ENCODE measurements at regions of chr1 and their contacts with region 1.

Region 1: DNA sequence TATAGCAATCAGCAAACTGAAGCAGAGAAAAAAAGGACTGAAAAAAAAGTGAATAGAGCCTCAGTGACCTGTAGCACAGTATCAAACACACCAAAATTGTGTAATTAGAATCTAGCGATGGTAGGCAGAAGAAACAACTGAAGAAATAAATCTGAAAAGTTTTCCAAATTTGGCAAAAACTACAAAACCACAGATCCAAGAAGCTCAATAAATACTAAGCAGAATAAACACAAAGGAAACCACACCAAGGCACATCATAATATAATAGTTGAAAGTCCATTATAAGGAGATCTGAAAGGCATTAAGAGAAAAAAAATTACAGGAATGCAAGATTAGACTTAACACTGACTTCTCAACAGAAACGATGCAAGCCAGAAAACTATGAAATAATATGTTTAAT is 7.1 kb upstream of the IL12RB2 start:
- DNase-seq: no peak
- H3K4me3 Mint-ChIP-seq: peak overlapping the region; percentile 35
- H3K27ac Mint-ChIP-seq: peak overlapping the region; percentile 63
- H3K4me1 Mint-ChIP-seq: peaks cover 88% of the 10 kb centered on the region
- H3K27me3 Mint-ChIP-seq: no peaks in the 10 kb centered on the region

Region 2: DNA sequence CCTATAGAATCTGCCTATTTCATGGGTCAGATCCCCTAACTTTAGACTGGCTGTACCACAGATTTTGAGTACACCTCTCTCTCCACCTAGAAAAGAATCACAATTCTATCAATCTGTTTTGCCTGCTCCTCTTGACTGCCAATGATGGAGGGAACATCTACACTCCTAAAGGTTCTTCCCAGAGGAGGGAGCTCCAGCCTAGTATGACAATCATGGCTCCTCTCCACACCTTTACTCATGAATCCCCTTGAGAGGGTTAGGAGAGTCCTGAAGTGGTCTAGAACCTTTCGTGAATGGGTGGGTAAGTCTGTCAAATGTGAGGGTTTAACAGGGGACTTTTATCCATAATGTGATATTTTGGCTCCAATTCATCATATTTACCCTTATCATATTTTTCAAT is 423.9 kb before region 1 on chr1:
- intact Hi-C with region 1: no loop called
- DNase-seq: no peak
- H3K4me3 Mint-ChIP-seq: no peak overlapping the region
- H3K27ac Mint-ChIP-seq: no peak overlapping the region
- H3K4me1 Mint-ChIP-seq: no peaks in the 10 kb centered on the region
- H3K27me3 Mint-ChIP-seq: peaks cover 6% of the 10 kb centered on the region

Region 3: DNA sequence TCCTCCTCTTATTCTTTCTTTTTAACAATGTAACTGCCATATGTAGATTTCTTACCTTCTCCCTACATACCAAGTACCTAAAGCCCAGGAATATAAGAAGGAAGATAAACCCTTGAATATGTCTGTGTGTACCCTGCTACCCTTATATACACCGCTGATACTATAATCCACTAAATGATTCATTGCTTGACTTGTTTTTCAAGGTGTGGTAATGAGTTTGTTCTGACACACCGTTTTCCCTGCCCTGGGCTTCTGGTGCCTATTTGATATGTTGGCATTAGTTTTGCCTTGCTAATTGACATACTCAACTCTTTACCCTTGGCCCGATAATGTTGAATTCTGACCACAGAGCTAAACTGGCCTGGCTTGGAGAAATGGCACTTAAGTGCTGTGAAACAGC is 70.0 kb before region 1 on chr1:
- intact Hi-C with region 1: loop called (anchors 1 kb)
- DNase-seq: no peak
- H3K4me3 Mint-ChIP-seq: no peak overlapping the region
- H3K27ac Mint-ChIP-seq: no peak overlapping the region
- H3K4me1 Mint-ChIP-seq: peaks cover 35% of the 10 kb centered on the region
- H3K27me3 Mint-ChIP-seq: no peaks in the 10 kb centered on the region

Region 4: GRCh38 chr1:67285780-67286488 is 14.6 kb before region 1 on chr1:
- intact Hi-C with region 1: loop called (anchors 1 kb)
- DNase-seq: no peak
- H3K4me3 Mint-ChIP-seq: peak overlapping the region; percentile 5
- H3K27ac Mint-ChIP-seq: peak overlapping the region; percentile 79
- H3K4me1 Mint-ChIP-seq: peaks cover 61% of the 10 kb centered on the region
- H3K27me3 Mint-ChIP-seq: no peaks in the 10 kb centered on the region

Region 5: DNA sequence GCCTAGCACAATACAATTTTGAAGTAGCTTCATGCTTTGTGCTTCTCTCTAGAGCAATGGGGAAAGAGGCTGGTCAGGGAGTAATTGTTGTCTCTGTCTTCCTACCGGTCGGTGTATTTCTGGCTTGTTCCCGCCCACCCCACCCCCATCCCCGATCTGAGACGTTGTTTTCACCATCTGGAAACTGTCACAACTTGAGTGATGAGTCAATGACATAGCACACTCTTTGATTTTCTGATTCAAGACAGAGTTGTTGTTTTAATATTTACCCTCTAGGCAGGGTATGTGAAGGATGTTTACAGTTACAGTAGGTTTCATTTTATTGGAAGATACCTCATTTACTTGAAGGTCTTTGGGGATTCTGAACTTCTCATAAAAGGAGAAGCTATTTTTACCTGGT is 14.1 kb after region 1 on chr1:
- intact Hi-C with region 1: loop called (anchors 1 kb)
- DNase-seq: no peak
- H3K4me3 Mint-ChIP-seq: peak overlapping the region; percentile 100
- H3K27ac Mint-ChIP-seq: peak overlapping the region; percentile 97
- H3K4me1 Mint-ChIP-seq: peaks cover 6% of the 10 kb centered on the region
- H3K27me3 Mint-ChIP-seq: no peaks in the 10 kb centered on the region

Region 6: GRCh38 chr1:67332653-67333529 is 32.3 kb after region 1 on chr1:
- intact Hi-C with region 1: loop called (anchors 1 kb)
- DNase-seq: peak; percentile 64
- H3K4me3 Mint-ChIP-seq: peak overlapping the region; percentile 27
- H3K27ac Mint-ChIP-seq: peak overlapping the region; percentile 99
- H3K4me1 Mint-ChIP-seq: peaks cover 77% of the 10 kb centered on the region
- H3K27me3 Mint-ChIP-seq: no peaks in the 10 kb centered on the region

Region 7: GRCh38 chr1:67339623-67340343 is 39.2 kb after region 1 on chr1:
- intact Hi-C with region 1: loop called (anchors 1 kb)
- DNase-seq: peak; percentile 47
- H3K4me3 Mint-ChIP-seq: peak overlapping the region; percentile 66
- H3K27ac Mint-ChIP-seq: peak overlapping the region; percentile 90
- H3K4me1 Mint-ChIP-seq: peaks cover 80% of the 10 kb centered on the region
- H3K27me3 Mint-ChIP-seq: no peaks in the 10 kb centered on the region